CD4-positive, alpha-beta T cell (primary cell): ENCODE measurements at regions of chr17 and their contacts with region 1.

Region 1: GRCh38 chr17:54194268-54194667 is 371.5 kb downstream of the KIF2B start:
- DNase-seq: no peak
- ATAC-seq: no peak
- H3K4me3 ChIP-seq: no peak overlapping the region
- H3K4me3 Mint-ChIP-seq: no peak overlapping the region
- H3K27ac ChIP-seq: no peak overlapping the region
- H3K27ac Mint-ChIP-seq: no peak overlapping the region
- H3K4me1 ChIP-seq: no peaks in the 10 kb centered on the region
- H3K4me1 Mint-ChIP-seq: no peaks in the 10 kb centered on the region
- H3K27me3 ChIP-seq: no peaks in the 10 kb centered on the region
- H3K27me3 Mint-ChIP-seq: no peaks in the 10 kb centered on the region
- CTCF ChIP-seq: no peak

Region 2: DNA sequence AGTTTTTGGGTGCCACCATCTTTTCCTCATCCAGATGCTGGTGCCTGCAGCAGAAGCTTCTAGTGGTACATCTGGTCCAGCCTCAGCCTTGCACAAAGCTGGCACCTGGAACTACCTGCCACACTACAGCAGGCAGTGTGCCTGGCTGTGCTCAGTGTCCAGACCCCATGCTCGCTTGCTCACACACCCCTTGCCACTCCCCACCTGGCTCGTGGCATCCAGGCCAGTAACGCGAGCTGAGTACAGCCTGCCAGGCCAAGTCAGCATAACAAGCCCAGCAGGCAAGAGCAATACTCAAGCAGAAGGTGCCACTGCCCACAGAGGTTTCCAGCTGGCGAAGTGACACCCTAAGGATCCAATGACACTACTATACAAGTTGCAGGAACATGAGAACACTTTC is 401.3 kb before region 1 on chr17:
- CTCF ChIA-PET with region 1: no interaction called
- POLR2A ChIA-PET with region 1: no interaction called
- intact Hi-C with region 1: no loop called
- DNase-seq: no peak
- ATAC-seq: no peak
- H3K4me3 ChIP-seq: no peak overlapping the region
- H3K4me3 Mint-ChIP-seq: no peak overlapping the region
- H3K27ac ChIP-seq: no peak overlapping the region
- H3K27ac Mint-ChIP-seq: no peak overlapping the region
- H3K4me1 ChIP-seq: no peaks in the 10 kb centered on the region
- H3K4me1 Mint-ChIP-seq: no peaks in the 10 kb centered on the region
- H3K27me3 ChIP-seq: no peaks in the 10 kb centered on the region
- H3K27me3 Mint-ChIP-seq: no peaks in the 10 kb centered on the region
- CTCF ChIP-seq: no peak

Region 3: DNA sequence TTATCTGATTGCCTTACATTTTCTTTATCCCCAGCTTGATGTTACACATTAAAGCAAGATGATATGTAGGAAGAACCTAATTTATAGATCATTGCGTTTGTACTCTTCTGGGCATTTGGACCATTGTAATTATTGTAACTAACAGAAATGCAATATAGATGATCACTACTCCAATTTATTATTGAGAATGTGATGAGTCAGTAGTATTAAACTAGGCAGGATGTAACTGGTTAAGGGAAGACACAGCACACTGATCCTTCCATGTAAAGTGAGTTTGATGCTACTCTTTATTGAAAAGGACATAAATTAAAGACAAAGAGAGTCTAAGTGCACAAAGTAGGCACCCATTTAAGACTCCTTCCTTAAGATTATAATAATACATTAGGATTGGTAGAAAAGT is 147.7 kb before region 1 on chr17:
- CTCF ChIA-PET with region 1: no interaction called
- POLR2A ChIA-PET with region 1: no interaction called
- intact Hi-C with region 1: no loop called
- DNase-seq: no peak
- ATAC-seq: no peak
- H3K4me3 ChIP-seq: no peak overlapping the region
- H3K4me3 Mint-ChIP-seq: no peak overlapping the region
- H3K27ac ChIP-seq: no peak overlapping the region
- H3K27ac Mint-ChIP-seq: no peak overlapping the region
- H3K4me1 ChIP-seq: no peaks in the 10 kb centered on the region
- H3K4me1 Mint-ChIP-seq: no peaks in the 10 kb centered on the region
- H3K27me3 ChIP-seq: no peaks in the 10 kb centered on the region
- H3K27me3 Mint-ChIP-seq: no peaks in the 10 kb centered on the region
- CTCF ChIP-seq: no peak

Region 4: GRCh38 chr17:54256401-54256929 is 62.2 kb after region 1 on chr17:
- CTCF ChIA-PET with region 1: no interaction called
- POLR2A ChIA-PET with region 1: no interaction called
- intact Hi-C with region 1: loop called in 1 of 2 experiments (anchors 10 kb)
- DNase-seq: no peak
- ATAC-seq: no peak
- H3K4me3 ChIP-seq: no peak overlapping the region
- H3K4me3 Mint-ChIP-seq: no peak overlapping the region
- H3K27ac ChIP-seq: no peak overlapping the region
- H3K27ac Mint-ChIP-seq: no peak overlapping the region
- H3K4me1 ChIP-seq: no peaks in the 10 kb centered on the region
- H3K4me1 Mint-ChIP-seq: no peaks in the 10 kb centered on the region
- H3K27me3 ChIP-seq: no peaks in the 10 kb centered on the region
- H3K27me3 Mint-ChIP-seq: no peaks in the 10 kb centered on the region
- CTCF ChIP-seq: no peak

Region 5: DNA sequence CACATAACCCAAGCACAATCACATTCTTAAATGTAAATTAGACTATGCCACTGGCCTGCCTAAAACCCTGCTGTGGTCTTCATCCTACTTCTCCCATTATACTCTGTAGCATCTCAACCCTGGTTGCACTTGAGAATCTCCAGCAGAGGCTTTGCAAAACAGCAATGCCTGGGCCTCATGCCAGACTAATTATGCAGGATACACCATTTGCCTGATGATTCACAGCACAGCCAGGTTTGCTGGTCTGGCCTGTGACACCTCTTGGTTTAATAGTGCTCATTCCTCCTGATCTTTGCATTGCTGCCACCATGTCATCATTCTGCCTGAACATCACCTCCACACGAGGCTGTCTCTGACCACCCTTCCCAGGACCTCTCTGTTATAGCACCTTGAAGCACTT is 214.5 kb after region 1 on chr17:
- CTCF ChIA-PET with region 1: no interaction called
- POLR2A ChIA-PET with region 1: no interaction called
- intact Hi-C with region 1: no loop called
- DNase-seq: no peak
- ATAC-seq: no peak
- H3K4me3 ChIP-seq: no peak overlapping the region
- H3K4me3 Mint-ChIP-seq: no peak overlapping the region
- H3K27ac ChIP-seq: no peak overlapping the region
- H3K27ac Mint-ChIP-seq: no peak overlapping the region
- H3K4me1 ChIP-seq: no peaks in the 10 kb centered on the region
- H3K4me1 Mint-ChIP-seq: no peaks in the 10 kb centered on the region
- H3K27me3 ChIP-seq: no peaks in the 10 kb centered on the region
- H3K27me3 Mint-ChIP-seq: no peaks in the 10 kb centered on the region
- CTCF ChIP-seq: no peak

Region 6: DNA sequence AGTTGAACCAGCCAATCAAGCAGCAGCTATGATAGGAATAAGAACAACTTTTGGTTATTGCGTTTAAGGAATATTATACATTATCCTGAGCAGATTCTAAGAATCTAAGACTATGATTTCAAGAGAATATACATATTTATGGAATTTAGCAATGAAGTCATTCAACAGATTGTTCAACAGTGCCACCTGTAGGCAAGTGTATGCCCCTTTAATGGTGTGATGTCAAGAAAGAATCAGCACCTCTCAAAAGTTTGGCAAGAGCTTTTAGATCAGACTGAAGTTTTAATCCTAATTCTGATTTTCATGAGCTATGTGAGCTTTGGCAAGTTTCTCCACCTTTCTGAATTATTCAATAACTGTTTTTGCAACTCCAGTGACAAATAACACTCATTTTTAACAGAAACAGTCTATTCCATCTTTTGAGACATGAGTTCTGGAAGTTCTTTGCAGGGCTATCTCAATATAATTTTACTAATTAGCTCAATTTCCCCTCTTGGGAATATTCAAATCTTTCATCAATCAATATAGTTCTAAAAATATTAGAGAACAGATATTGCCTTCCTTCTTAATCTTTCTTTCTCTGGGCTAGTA is 232.1 kb after region 1 on chr17:
- CTCF ChIA-PET with region 1: no interaction called
- POLR2A ChIA-PET with region 1: no interaction called
- intact Hi-C with region 1: no loop called
- DNase-seq: no peak
- ATAC-seq: no peak
- H3K4me3 ChIP-seq: no peak overlapping the region
- H3K4me3 Mint-ChIP-seq: no peak overlapping the region
- H3K27ac ChIP-seq: no peak overlapping the region
- H3K27ac Mint-ChIP-seq: no peak overlapping the region
- H3K4me1 ChIP-seq: no peaks in the 10 kb centered on the region
- H3K4me1 Mint-ChIP-seq: no peaks in the 10 kb centered on the region
- H3K27me3 ChIP-seq: no peaks in the 10 kb centered on the region
- H3K27me3 Mint-ChIP-seq: no peaks in the 10 kb centered on the region
- CTCF ChIP-seq: no peak